ENCODE measurements at regions of chr2 and their contacts with region 1.

Region 1: GRCh38 chr2:178914259-178914849 is 107.1 kb upstream of the TTN start:
- DNase-seq: peak; percentile 70
- ATAC-seq: peak; percentile 79
- H3K4me3 ChIP-seq: no peak overlapping the region
- H3K4me3 Mint-ChIP-seq: no peak overlapping the region
- H3K27ac ChIP-seq: no peak overlapping the region
- H3K27ac Mint-ChIP-seq: no peak overlapping the region
- H3K4me1 ChIP-seq: no peaks in the 10 kb centered on the region
- H3K4me1 Mint-ChIP-seq: peaks cover 9% of the 10 kb centered on the region
- H3K27me3 ChIP-seq: no peaks in the 10 kb centered on the region
- H3K27me3 Mint-ChIP-seq: no peaks in the 10 kb centered on the region
- CTCF ChIP-seq: peak; percentile 90

Region 2: DNA sequence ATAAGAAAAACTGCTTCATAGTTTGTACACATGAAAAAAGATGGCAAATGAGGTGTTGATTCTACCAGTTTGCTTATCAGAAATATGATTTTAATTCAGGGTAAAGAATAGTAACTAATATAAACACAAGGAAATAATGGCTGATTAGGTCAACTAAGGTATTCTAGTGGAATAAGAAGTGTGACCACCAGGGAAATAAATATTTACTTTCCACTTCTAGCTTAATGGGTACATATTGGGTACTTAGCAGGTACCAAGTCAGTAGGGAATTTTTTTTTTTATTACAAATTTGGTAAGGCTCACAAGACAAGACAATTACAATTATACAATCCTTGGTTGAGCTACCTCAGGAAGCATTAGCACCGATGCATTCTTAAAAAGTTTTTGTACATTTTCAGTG is 298.4 kb before region 1 on chr2:
- CTCF ChIA-PET with region 1: no interaction called
- POLR2A ChIA-PET with region 1: no interaction called
- intact Hi-C with region 1: no loop called
- DNase-seq: no peak
- ATAC-seq: no peak
- H3K4me3 ChIP-seq: no peak overlapping the region
- H3K4me3 Mint-ChIP-seq: no peak overlapping the region
- H3K27ac ChIP-seq: no peak overlapping the region
- H3K27ac Mint-ChIP-seq: no peak overlapping the region
- H3K4me1 ChIP-seq: no peaks in the 10 kb centered on the region
- H3K4me1 Mint-ChIP-seq: no peaks in the 10 kb centered on the region
- H3K27me3 ChIP-seq: no peaks in the 10 kb centered on the region
- H3K27me3 Mint-ChIP-seq: no peaks in the 10 kb centered on the region
- CTCF ChIP-seq: no peak

Region 3: GRCh38 chr2:178761759-178762371 is 152.5 kb before region 1 on chr2:
- CTCF ChIA-PET with region 1: interaction called, 6 read pairs
- POLR2A ChIA-PET with region 1: no interaction called
- intact Hi-C with region 1: loop called (anchors 5 kb)
- DNase-seq: peak; percentile 57
- ATAC-seq: peak; percentile 54
- H3K4me3 ChIP-seq: no peak overlapping the region
- H3K4me3 Mint-ChIP-seq: no peak overlapping the region
- H3K27ac ChIP-seq: no peak overlapping the region
- H3K27ac Mint-ChIP-seq: no peak overlapping the region
- H3K4me1 ChIP-seq: no peaks in the 10 kb centered on the region
- H3K4me1 Mint-ChIP-seq: no peaks in the 10 kb centered on the region
- H3K27me3 ChIP-seq: no peaks in the 10 kb centered on the region
- H3K27me3 Mint-ChIP-seq: no peaks in the 10 kb centered on the region
- CTCF ChIP-seq: peak; percentile 97

Region 4: GRCh38 chr2:178863856-178864620 is 50.3 kb before region 1 on chr2:
- CTCF ChIA-PET with region 1: no interaction called
- POLR2A ChIA-PET with region 1: no interaction called
- intact Hi-C with region 1: no loop called
- DNase-seq: no peak
- ATAC-seq: no peak
- H3K4me3 ChIP-seq: no peak overlapping the region
- H3K4me3 Mint-ChIP-seq: no peak overlapping the region
- H3K27ac ChIP-seq: no peak overlapping the region
- H3K27ac Mint-ChIP-seq: no peak overlapping the region
- H3K4me1 ChIP-seq: no peaks in the 10 kb centered on the region
- H3K4me1 Mint-ChIP-seq: no peaks in the 10 kb centered on the region
- H3K27me3 ChIP-seq: no peaks in the 10 kb centered on the region
- H3K27me3 Mint-ChIP-seq: no peaks in the 10 kb centered on the region
- CTCF ChIP-seq: no peak